Gastrocnemius medialis (tissue), 4 donors: ENCODE measurements at regions of chr6 and their contacts with region 1.

Region 1: GRCh38 chr6:41072676-41073623 is at the start of gene NFYA:
- DNase-seq: peak; percentile 99
- ATAC-seq: peak; percentile 66 to 67
- H3K4me3 ChIP-seq: peak within 1 kb of the TSS; percentile 75 to 93 (median 82)
- H3K27ac ChIP-seq: peak within 1 kb of the TSS; percentile 97 to 99 (median 98)
- H3K4me1 ChIP-seq: peaks cover 34 to 47% of the 10 kb centered on the region in 2 donors
- H3K27me3 ChIP-seq: no peaks in the 10 kb centered on the region
- CTCF ChIP-seq: peak in 4 of 5 experiments; percentile 49 to 82 (median 62)
- POLR2A ChIP-seq: peak; percentile 97 to 98
- total RNA-seq, gene NFYA: 7.2 to 11.6 (median 9.7) TPM

Region 2: DNA sequence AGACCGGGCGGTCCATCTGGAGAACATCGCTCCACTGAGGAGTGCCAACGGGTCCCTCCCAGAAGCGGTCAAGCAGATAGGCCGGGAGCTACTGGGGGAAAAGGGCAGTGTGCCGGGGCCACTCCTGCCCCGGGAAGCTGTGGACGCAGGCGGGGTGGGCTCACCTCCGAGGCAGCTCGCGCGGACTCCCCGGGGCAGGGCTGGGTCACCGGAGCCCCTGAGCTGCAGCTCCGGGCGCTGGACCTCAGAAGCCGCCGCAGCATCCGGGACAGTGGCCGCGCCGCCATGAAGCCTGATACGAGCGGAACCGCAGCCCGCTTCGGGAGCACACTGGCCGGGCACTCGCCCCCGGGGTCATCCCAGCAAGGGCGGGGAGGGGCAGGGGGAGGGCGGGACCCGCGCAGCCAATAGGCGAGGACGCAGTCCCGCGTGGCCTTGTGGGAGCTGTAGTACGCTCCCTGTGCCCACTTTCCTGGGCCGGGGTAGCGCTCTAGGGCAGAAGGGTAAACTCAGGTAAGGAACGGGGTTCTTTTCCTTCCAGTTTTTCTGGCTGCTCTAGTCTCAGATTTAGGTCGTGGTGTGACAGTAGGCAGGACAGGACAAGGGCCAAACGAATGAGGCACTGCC is 1138.7 kb before region 1 on chr6 and contains the start of gene MOCS1:
- in situ Hi-C with region 1: no loop called
- intact Hi-C with region 1: loop called (anchors 5 kb)
- DNase-seq: peak; percentile 87 to 92
- ATAC-seq: peak; percentile 39 to 63
- H3K4me3 ChIP-seq: peak within 1 kb of the TSS; percentile 80 to 98 (median 94)
- H3K27ac ChIP-seq: peak within 1 kb of the TSS; percentile 95 to 99 (median 97)
- H3K4me1 ChIP-seq: peaks cover 59 to 63% of the 10 kb centered on the region in 2 donors
- H3K27me3 ChIP-seq: no peaks in the 10 kb centered on the region
- CTCF ChIP-seq: no peak
- POLR2A ChIP-seq: peak; percentile 96 to 97
- total RNA-seq, gene MOCS1: 26.4 to 61.7 (median 38.4) TPM

Region 3: DNA sequence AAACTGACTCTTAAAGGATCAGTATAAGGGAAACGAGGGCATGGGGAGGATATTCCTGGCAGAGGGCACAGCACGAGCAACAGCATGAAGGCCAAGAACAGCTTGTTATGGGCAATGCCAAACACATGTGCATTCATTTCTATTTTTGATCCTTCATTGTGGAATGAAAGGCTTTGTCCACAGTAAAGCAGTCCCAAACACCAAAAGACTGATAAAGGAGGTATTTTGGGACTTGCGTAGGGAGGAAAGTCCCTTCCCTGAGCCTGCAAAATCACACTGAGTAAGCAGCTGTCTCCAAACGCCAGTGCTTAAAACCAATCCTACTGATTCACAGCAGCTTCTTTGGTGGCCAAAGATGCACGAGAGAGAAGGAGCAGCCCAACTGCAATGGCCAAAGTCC is 172.2 kb before region 1 on chr6:
- in situ Hi-C with region 1: no loop called
- intact Hi-C with region 1: loop called (anchors 5 kb)
- DNase-seq: peak; percentile 61 to 62
- ATAC-seq: peak; percentile 83
- H3K4me3 ChIP-seq: no peak overlapping the region
- H3K27ac ChIP-seq: peak overlapping the region; percentile 76 to 84 (median 80)
- H3K4me1 ChIP-seq: peaks cover 20 to 33% of the 10 kb centered on the region in 2 donors
- H3K27me3 ChIP-seq: no peaks in the 10 kb centered on the region
- CTCF ChIP-seq: no peak
- POLR2A ChIP-seq: no peak

Region 4: GRCh38 chr6:41051873-41052272 is 21.1 kb before region 1 on chr6:
- in situ Hi-C with region 1: no loop called
- intact Hi-C with region 1: loop called (anchors 2 kb)
- DNase-seq: no peak
- ATAC-seq: no peak
- H3K4me3 ChIP-seq: no peak overlapping the region
- H3K27ac ChIP-seq: peak overlapping the region; percentile 96 to 99 (median 98)
- H3K4me1 ChIP-seq: peaks cover 75 to 77% of the 10 kb centered on the region in 2 donors
- H3K27me3 ChIP-seq: no peaks in the 10 kb centered on the region
- CTCF ChIP-seq: no peak
- POLR2A ChIP-seq: no peak

Region 5: GRCh38 chr6:41386594-41386993 is 313.6 kb after region 1 on chr6:
- in situ Hi-C with region 1: no loop called
- intact Hi-C with region 1: no loop called
- DNase-seq: no peak
- ATAC-seq: no peak
- H3K4me3 ChIP-seq: no peak overlapping the region
- H3K27ac ChIP-seq: no peak overlapping the region
- H3K4me1 ChIP-seq: no peaks in the 10 kb centered on the region
- H3K27me3 ChIP-seq: peaks cover 0 to 13% (median 6%) of the 10 kb centered on the region in 3 donors
- CTCF ChIP-seq: no peak
- POLR2A ChIP-seq: no peak